Right ventricle myocardium inferior (tissue), 1 donor: ENCODE measurements at regions of chr2 and their contacts with region 1.

Region 1: DNA sequence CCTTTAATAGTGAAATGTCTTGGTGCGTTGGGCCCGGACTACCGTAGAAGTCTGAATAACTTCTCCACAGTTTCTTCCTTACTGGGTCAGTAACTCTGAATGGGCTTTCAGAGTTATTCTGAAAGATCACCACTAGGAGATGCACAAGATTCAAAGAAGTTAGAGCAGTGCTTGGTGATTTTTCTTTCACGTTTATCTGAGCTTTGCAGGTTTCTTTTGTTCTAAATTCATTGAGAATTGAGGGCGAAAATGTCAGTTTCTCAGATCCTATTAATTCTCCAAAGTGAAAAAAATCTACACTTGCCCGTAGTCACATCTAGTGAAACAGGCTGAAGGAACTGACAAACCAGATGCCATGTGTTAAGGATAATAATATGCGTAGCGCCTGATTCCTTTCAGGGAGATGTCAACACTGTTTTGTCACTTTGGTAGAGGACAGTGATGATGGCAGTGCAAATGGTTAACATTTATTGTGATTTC is 70.1 kb downstream of the QPCT start:
- DNase-seq: no peak
- ATAC-seq: peak; percentile 75

Region 2: DNA sequence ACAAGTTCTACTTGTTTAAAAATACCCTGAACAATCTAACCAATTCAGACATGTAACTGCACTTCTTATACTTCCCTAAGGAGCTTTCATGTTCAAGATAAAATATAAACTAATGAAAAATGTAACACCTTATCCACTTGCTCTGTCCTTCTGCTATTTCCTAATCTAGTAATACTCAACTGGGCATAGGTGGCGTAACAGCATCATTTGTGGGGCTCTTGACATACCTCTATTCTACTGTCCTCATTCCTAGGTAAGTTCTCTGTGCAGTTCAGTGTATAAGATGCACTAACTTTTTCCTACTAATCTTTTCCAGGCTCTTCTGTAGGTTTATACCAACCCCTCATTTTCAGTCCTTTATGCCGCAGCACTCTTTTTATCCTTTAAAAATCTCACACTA is 126.5 kb before region 1 on chr2:
- intact Hi-C with region 1: no loop called
- DNase-seq: no peak
- ATAC-seq: no peak

Region 3: DNA sequence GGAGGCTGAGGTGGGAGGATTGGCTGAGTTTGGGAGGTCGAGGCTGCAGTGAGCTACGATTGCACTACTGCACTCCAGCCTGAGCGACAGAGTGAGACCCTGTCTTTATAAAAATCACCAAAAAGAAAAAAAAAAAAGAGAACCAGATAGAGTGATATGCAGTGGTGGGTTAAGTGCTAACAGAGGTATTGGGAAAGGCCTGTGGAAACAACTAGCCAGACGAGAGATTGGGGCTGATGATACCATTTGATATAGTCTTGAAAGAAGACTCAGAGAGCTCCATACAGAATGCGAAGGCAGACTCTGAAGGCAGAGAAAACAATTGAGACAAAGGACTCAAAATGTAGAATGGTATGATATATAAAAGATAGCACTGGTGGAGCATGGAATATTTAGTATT is 122.8 kb after region 1 on chr2:
- intact Hi-C with region 1: loop called (anchors 2 kb)
- DNase-seq: no peak
- ATAC-seq: no peak

Region 4: DNA sequence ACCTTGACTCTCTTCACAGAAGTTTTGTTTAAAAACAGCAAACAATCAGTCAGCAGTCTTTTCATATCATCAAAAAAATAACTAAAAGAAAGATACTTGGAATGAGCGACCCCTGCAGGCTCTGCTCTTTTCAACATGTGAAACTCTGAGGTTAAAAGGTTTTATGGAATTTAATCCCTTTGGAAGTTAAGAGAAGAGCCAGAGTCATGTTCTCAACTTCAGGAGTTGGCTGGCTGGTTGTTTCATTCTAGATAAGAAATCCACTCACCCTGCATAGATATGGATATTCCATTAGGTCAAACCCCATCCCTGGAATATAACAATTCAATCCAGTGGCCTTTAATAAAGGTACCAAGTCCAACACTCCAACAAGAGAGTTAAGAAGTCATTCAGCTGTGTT is 395.0 kb after region 1 on chr2:
- intact Hi-C with region 1: loop called (anchors 5 kb)
- DNase-seq: no peak
- ATAC-seq: peak; percentile 26